RWPE1 (cell line): ENCODE measurements at regions of chr17 and their contacts with region 1.

Region 1: GRCh38 chr17:8084250-8084649 is 3.3 kb downstream of the ALOX12B start:
- DNase-seq: no peak
- H3K27ac ChIP-seq: no peak overlapping the region
- CTCF ChIP-seq: no peak

Region 2: DNA sequence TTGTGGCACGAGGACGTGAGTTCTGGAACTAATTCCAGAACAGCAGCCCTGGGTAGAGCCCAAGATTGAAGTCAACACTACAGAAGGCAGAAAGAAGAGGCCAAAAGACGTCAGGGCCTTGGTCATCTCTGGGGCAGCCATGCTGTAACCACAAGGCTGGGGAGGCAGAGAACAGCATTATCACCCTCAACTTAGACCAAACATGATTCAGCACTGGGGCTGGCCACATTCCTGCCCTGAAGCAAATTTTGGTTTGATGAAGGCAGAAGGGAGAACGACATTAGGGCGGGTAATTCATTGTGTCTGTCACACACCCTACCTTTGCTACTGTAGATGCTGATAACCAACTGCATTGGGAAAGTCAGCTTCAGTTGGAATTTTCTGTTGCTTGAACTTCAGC is 55.1 kb before region 1 on chr17:
- CTCF ChIA-PET with region 1: no interaction called
- POLR2A ChIA-PET with region 1: no interaction called
- DNase-seq: peak; percentile 44
- H3K27ac ChIP-seq: no peak overlapping the region; the same call in 1 of the 2 replicates
- CTCF ChIP-seq: no peak

Region 3: DNA sequence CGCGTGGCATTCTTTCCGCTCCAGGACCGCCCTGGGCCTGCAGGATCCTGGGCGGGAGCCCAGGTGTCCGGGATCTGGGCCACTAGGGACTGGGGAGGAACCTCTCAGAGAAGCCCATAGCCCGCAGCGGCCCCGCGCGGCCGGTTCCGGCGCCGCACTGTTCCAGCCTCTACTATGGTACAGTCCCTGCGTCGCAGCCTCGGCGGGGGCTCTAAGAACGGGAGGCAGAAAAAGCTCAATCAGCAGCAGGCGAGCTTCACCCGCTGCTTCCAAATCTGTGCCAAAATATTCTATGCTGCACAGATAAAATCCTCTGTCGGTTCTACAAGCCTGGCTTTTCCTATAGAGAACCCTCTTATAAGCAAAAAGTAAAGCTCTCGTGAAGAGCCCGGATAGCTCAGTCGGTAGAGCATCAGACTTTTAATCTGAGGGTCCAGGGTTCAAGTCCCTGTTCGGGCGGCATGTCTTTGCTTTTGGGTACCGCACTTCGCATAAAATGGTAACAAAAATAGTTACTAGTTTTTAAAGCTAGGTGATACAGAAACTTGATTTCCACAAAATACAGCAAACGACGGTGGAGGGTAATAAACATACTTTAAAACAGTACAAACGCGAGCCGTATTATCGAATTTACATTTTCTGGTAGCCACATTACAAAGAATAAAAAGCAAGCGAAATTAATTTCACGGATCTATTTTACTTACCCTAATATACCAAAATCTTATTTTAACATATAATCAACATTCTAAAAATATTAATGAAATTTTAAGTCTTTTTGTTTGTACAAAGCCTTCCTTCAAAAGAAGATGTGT is 34.7 kb after region 1 on chr17:
- CTCF ChIA-PET with region 1: interaction called, 12 read pairs
- POLR2A ChIA-PET with region 1: no interaction called
- DNase-seq: peak; percentile 75
- H3K27ac ChIP-seq: peak overlapping the region; percentile 95
- CTCF ChIP-seq: peak; percentile 91